A673 (cell line): ENCODE measurements at regions of chr12 and their contacts with region 1.

Region 1: GRCh38 chr12:3964439-3964838 is 91.2 kb upstream of the PARP11 start:
- DNase-seq: peak; percentile 2
- H3K4me3 ChIP-seq: no peak overlapping the region
- H3K27ac ChIP-seq: no peak overlapping the region
- H3K4me1 ChIP-seq: no peaks in the 10 kb centered on the region
- H3K27me3 ChIP-seq: no peaks in the 10 kb centered on the region
- CTCF ChIP-seq: peak; percentile 30; the same call in 1 of the 2 replicates

Region 2: GRCh38 chr12:3998968-3999826 is 34.8 kb after region 1 on chr12:
- CTCF ChIA-PET with region 1: no interaction called
- POLR2A ChIA-PET with region 1: no interaction called
- intact Hi-C with region 1: no loop called
- DNase-seq: no peak
- H3K4me3 ChIP-seq: no peak overlapping the region
- H3K27ac ChIP-seq: no peak overlapping the region
- H3K4me1 ChIP-seq: no peaks in the 10 kb centered on the region
- H3K27me3 ChIP-seq: peaks cover 8% of the 10 kb centered on the region
- CTCF ChIP-seq: no peak

Region 3: DNA sequence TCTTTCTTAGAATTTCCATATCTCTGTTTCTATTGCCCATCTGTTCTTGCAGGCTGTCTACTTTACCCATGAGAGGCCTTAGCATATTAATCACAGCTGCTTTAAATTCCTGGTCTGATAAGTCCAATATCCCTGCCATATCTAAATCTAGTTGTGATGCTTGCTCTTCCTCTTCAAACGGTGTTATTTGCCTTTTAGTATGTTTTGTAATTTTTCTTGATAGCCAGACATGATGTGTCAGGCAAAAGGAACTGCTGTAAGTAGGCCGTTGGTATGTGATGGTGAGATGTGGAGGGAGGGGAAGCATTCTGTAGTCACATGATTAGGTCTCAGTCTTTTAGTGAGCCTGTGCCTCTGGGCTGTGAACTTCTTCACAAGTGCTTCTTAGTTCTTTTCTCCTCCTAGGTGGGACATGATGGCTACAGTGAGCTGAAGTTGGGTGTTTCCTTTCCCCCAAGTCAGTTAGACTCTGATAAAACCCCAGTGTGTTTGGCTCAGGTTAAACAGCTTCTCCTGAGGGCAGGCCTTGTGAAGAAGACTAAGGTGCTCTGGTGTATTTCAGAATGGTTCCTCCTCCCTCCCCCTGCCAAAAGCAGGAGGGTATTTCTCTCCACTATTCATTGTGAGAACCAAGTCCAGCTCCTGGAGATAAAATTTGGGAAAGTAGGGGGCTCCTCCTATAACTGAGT is 104.7 kb after region 1 on chr12:
- CTCF ChIA-PET with region 1: interaction called, 13 read pairs
- POLR2A ChIA-PET with region 1: no interaction called
- intact Hi-C with region 1: no loop called
- DNase-seq: no peak
- H3K4me3 ChIP-seq: no peak overlapping the region
- H3K27ac ChIP-seq: no peak overlapping the region
- H3K4me1 ChIP-seq: no peaks in the 10 kb centered on the region
- H3K27me3 ChIP-seq: peaks cover 21% of the 10 kb centered on the region
- CTCF ChIP-seq: no peak

Region 4: GRCh38 chr12:4932576-4932975 is 968.1 kb after region 1 on chr12:
- CTCF ChIA-PET with region 1: no interaction called
- POLR2A ChIA-PET with region 1: interaction called, 17 read pairs
- intact Hi-C with region 1: no loop called
- DNase-seq: no peak
- H3K4me3 ChIP-seq: no peak overlapping the region
- H3K27ac ChIP-seq: no peak overlapping the region
- H3K4me1 ChIP-seq: no peaks in the 10 kb centered on the region
- H3K27me3 ChIP-seq: peaks cover 70% of the 10 kb centered on the region
- CTCF ChIP-seq: no peak